Activated CD4-positive, alpha-beta T cell treated with anti-CD3 and anti-CD28 coated beads for 36 hours (primary cell): ENCODE measurements at regions of chr6 and their contacts with region 1.

Region 1: DNA sequence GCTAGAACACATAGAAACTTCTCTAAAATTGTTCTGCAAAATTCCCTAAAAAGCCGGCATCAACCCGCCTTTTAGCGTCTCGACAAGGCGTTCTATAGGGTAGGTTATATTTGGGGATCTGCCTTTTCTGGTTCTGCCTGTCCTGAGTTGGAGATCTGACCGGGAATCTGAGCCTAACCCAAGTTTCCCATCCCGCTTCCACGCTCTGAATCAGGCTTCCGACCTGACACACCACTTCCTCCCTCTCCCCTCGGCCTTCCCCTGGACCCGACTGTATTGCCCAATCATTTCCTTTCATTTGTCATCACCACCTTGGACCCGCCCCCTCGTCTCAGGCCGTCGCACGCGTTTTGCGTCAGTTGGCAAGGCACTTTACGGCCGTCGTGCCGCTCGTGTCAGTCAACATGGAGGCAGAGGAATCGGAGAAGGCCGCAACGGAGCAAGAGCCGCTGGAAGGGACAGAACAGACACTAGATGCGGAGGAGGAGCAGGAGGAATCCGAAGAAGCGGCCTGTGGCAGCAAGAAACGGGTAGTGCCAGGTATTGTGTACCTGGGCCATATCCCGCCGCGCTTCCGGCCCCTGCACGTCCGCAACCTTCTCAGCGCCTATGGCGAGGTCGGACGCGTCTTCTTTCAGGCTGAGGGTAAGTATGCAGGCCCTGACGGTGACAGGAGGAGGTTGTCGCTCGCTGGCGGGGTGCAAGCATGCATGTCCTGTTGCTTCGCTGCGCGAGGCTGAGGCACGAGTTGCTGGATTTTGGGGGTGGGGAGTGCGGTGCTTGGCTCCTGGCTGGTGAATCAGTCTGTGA is at the start of gene ABT1:
- DNase-seq: peak; percentile 98
- ATAC-seq: peak; percentile 66
- H3K4me3 Mint-ChIP-seq: no peak within 1 kb of the TSS
- H3K27ac Mint-ChIP-seq: no peak within 1 kb of the TSS
- H3K4me1 Mint-ChIP-seq: peaks cover 41% of the 10 kb centered on the region
- H3K27me3 Mint-ChIP-seq: peaks cover 18% of the 10 kb centered on the region
- total RNA-seq, gene ABT1: 21.5 to 24.9 TPM

Region 2: GRCh38 chr6:26175428-26176181 is 421.2 kb before region 1 on chr6:
- CTCF ChIA-PET with region 1: interaction called, 6 read pairs
- POLR2A ChIA-PET with region 1: interaction called, 5 read pairs
- intact Hi-C with region 1: loop called (anchors 1 kb)
- DNase-seq: peak; percentile 69
- ATAC-seq: peak; percentile 14
- H3K4me3 Mint-ChIP-seq: peak overlapping the region; percentile 30
- H3K27ac Mint-ChIP-seq: peak overlapping the region; percentile 80
- H3K4me1 Mint-ChIP-seq: peaks cover 33% of the 10 kb centered on the region
- H3K27me3 Mint-ChIP-seq: no peaks in the 10 kb centered on the region

Region 3: DNA sequence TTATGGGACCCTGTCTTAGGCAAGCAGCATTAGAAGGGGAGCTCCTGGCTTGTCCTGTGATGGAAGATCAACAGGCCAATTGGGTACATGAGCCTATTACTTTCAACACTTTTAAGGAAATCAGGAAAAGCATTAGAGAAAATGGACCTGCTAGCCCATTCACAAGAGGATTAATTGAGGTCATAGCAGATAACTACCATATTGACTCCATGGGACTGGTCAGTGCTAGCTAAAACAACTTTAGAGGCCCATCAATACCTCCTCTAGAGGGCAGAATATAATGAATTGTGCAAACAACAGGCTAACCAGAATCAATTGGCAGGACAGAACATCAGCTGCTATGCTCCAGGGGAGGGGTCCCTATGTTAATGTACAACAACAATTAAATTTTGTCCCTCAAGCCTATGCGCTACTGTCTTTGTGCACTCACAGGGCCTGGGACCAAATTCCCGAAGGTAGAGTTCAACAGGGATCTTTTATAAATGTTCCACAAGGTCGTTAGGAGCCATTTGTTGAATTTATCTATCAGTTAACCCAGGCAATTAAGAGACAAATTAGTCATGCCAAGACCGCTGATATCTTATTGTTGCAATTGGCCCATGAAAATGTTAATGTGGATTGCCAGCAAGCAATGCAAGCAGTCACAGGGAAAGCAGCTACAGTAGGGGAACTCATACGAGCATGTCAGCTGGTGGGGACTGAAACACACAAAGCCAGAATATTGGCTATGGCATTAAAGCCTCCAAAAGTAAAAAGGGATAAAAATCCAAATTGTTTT is 338.4 kb before region 1 on chr6:
- CTCF ChIA-PET with region 1: no interaction called
- POLR2A ChIA-PET with region 1: no interaction called
- intact Hi-C with region 1: no loop called
- DNase-seq: no peak
- ATAC-seq: no peak
- H3K4me3 Mint-ChIP-seq: no peak overlapping the region
- H3K27ac Mint-ChIP-seq: no peak overlapping the region
- H3K4me1 Mint-ChIP-seq: no peaks in the 10 kb centered on the region
- H3K27me3 Mint-ChIP-seq: no peaks in the 10 kb centered on the region

Region 4: GRCh38 chr6:26342106-26343004 is 254.4 kb before region 1 on chr6:
- CTCF ChIA-PET with region 1: interaction called, 11 read pairs
- POLR2A ChIA-PET with region 1: no interaction called
- intact Hi-C with region 1: loop called (anchors 1 kb)
- DNase-seq: peak; percentile 63
- ATAC-seq: peak; percentile 60
- H3K4me3 Mint-ChIP-seq: peak overlapping the region; percentile 73
- H3K27ac Mint-ChIP-seq: peak overlapping the region; percentile 81
- H3K4me1 Mint-ChIP-seq: peaks cover 12% of the 10 kb centered on the region
- H3K27me3 Mint-ChIP-seq: no peaks in the 10 kb centered on the region

Region 5: GRCh38 chr6:26553635-26554446 is 42.9 kb before region 1 on chr6:
- CTCF ChIA-PET with region 1: interaction called, 4 read pairs
- POLR2A ChIA-PET with region 1: interaction called, 4 read pairs
- intact Hi-C with region 1: loop called in 1 of 2 experiments (anchors 1 kb)
- DNase-seq: peak; percentile 89
- ATAC-seq: peak; percentile 58
- H3K4me3 Mint-ChIP-seq: no peak overlapping the region
- H3K27ac Mint-ChIP-seq: no peak overlapping the region
- H3K4me1 Mint-ChIP-seq: peaks cover 27% of the 10 kb centered on the region
- H3K27me3 Mint-ChIP-seq: no peaks in the 10 kb centered on the region

Region 6: DNA sequence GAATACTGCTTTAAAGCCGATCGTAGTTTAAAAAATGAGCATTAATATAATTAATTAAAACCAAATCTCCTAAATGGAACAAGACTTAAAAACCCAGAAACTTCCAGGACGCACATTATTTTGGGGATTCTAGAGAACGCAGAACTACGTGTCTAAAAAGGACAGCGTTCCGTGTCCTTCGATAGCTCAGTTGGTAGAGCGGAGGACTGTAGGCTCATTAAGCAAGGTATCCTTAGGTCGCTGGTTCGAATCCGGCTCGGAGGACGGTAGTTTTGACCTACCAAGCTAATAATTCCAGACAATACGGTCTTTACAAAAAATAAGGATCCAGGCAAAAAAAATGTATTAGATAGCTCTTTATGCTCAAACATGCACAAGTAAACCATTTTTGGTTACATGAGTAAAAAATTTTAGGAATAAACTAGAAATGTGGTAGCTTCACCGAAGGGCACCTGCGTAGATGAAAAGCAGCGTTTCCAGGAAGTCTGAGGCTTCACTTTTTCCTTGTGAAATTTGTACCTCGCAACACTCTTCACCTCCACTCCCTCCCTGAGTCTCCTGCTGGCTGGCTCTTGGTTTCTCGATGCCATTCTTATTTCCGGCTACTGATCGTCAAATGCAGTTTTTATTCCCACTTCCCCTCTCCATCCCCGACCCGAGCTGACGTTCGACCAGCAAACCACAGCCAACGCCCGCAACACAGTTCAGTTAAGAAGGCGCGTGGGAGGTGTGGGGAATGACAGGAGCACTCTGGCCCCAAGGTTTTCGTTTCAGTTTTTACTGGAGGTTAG is 19.7 kb before region 1 on chr6:
- CTCF ChIA-PET with region 1: interaction called, 44 read pairs
- POLR2A ChIA-PET with region 1: interaction called, 3 read pairs
- intact Hi-C with region 1: loop called (anchors 1 kb)
- DNase-seq: peak; percentile 86
- ATAC-seq: peak; percentile 65
- H3K4me3 Mint-ChIP-seq: peak overlapping the region; percentile 71
- H3K27ac Mint-ChIP-seq: peak overlapping the region; percentile 68
- H3K4me1 Mint-ChIP-seq: peaks cover 37% of the 10 kb centered on the region
- H3K27me3 Mint-ChIP-seq: peaks cover 2% of the 10 kb centered on the region

Region 7: GRCh38 chr6:27479319-27480182 is 882.8 kb after region 1 on chr6:
- CTCF ChIA-PET with region 1: no interaction called
- POLR2A ChIA-PET with region 1: no interaction called
- intact Hi-C with region 1: loop called in 1 of 2 experiments (anchors 5 kb)
- DNase-seq: peak; percentile 89
- ATAC-seq: peak; percentile 69
- H3K4me3 Mint-ChIP-seq: no peak overlapping the region
- H3K27ac Mint-ChIP-seq: no peak overlapping the region
- H3K4me1 Mint-ChIP-seq: peaks cover 6% of the 10 kb centered on the region
- H3K27me3 Mint-ChIP-seq: no peaks in the 10 kb centered on the region